ENCODE measurements at regions of chr3 and their contacts with region 1.

Region 1: GRCh38 chr3:153161138-153161713 is 800 bp upstream of the RAP2B start:
- DNase-seq: peak; percentile 100
- H3K4me3 ChIP-seq: peak overlapping the region; percentile 72
- H3K27ac ChIP-seq: peak overlapping the region; percentile 76
- H3K4me1 ChIP-seq: peaks cover 25% of the 10 kb centered on the region
- H3K27me3 ChIP-seq: no peaks in the 10 kb centered on the region
- CTCF ChIP-seq: no peak

Region 2: GRCh38 chr3:153144779-153145178 is 16.4 kb before region 1 on chr3:
- CTCF ChIA-PET with region 1: no interaction called
- POLR2A ChIA-PET with region 1: no interaction called
- intact Hi-C with region 1: loop called (anchors 1 kb)
- DNase-seq: peak; percentile 77
- H3K4me3 ChIP-seq: no peak overlapping the region
- H3K27ac ChIP-seq: peak overlapping the region; percentile 56
- H3K4me1 ChIP-seq: peaks cover 19% of the 10 kb centered on the region
- H3K27me3 ChIP-seq: no peaks in the 10 kb centered on the region
- CTCF ChIP-seq: no peak

Region 3: GRCh38 chr3:153443961-153444360 is 282.7 kb after region 1 on chr3:
- CTCF ChIA-PET with region 1: no interaction called
- POLR2A ChIA-PET with region 1: no interaction called
- intact Hi-C with region 1: loop called (anchors 10 kb)
- DNase-seq: peak; percentile 54
- H3K4me3 ChIP-seq: no peak overlapping the region
- H3K27ac ChIP-seq: no peak overlapping the region
- H3K4me1 ChIP-seq: no peaks in the 10 kb centered on the region
- H3K27me3 ChIP-seq: no peaks in the 10 kb centered on the region
- CTCF ChIP-seq: peak; percentile 54

Region 4: GRCh38 chr3:153621953-153622352 is 460.7 kb after region 1 on chr3:
- CTCF ChIA-PET with region 1: no interaction called
- POLR2A ChIA-PET with region 1: no interaction called
- intact Hi-C with region 1: no loop called
- DNase-seq: peak; percentile 35
- H3K4me3 ChIP-seq: no peak overlapping the region
- H3K27ac ChIP-seq: no peak overlapping the region
- H3K4me1 ChIP-seq: peaks cover 5% of the 10 kb centered on the region
- H3K27me3 ChIP-seq: no peaks in the 10 kb centered on the region
- CTCF ChIP-seq: no peak

Region 5: DNA sequence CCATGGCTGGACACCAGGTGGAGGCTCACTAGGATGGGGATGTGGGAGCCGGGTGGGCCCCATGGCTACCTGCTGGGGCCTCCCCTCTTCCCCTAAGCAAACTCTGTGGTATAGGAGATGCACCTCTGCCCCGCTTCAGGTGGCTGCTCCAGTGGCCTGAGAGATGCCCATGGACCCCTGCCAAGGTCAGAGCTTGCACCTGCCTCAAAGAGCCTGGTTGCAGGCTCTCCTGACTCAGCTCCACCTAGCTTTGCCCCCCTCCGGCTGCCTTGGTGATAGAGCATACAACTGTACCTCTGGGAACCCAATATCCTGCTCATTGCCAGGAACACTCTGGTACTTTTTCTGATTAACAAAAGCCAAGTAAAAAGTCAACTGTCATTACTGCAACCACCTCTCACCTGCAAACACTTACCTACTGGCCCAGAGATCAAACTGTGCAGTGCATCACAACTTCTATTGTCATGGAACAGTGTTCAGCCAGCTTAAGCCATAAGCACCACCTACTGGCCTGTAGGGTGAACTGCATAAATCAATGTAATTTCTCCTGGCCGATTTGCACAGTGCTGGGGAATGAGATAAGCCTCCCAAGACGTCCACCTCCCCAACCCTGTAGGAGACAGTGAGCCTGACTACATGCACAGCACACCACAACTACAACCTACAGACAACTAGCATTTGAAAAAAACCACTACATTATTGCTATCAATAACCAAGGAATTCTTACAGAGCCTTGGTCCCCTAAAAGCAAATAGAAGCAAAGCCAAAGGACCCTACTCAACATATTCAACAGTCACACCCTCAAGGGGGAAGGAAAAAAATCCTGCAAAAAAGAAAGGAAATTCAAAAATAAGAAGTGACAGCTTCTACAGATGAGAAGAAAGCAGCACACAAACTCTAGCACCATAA is 607.6 kb after region 1 on chr3:
- CTCF ChIA-PET with region 1: no interaction called
- POLR2A ChIA-PET with region 1: interaction called, 15 read pairs
- intact Hi-C with region 1: loop called (anchors 5 kb)
- DNase-seq: peak; percentile 75
- H3K4me3 ChIP-seq: no peak overlapping the region
- H3K27ac ChIP-seq: no peak overlapping the region
- H3K4me1 ChIP-seq: no peaks in the 10 kb centered on the region
- H3K27me3 ChIP-seq: no peaks in the 10 kb centered on the region
- CTCF ChIP-seq: peak; percentile 84